Endothelial cell of umbilical vein (primary cell): ENCODE measurements at regions of chr12 and their contacts with region 1.

Region 1: GRCh38 chr12:49232940-49233841 is 31.7 kb upstream of the TUBA1C start:
- DNase-seq: peak; percentile 71
- H3K4me3 ChIP-seq: peak overlapping the region in 1 of 3 experiments; percentile 5
- H3K27ac ChIP-seq: no peak overlapping the region
- H3K4me1 ChIP-seq: peaks cover 12% of the 10 kb centered on the region
- H3K27me3 ChIP-seq: no peaks in the 10 kb centered on the region
- CTCF ChIP-seq: peak in 1 of 2 donors; percentile 34
- POLR2A ChIP-seq: no peak

Region 2: DNA sequence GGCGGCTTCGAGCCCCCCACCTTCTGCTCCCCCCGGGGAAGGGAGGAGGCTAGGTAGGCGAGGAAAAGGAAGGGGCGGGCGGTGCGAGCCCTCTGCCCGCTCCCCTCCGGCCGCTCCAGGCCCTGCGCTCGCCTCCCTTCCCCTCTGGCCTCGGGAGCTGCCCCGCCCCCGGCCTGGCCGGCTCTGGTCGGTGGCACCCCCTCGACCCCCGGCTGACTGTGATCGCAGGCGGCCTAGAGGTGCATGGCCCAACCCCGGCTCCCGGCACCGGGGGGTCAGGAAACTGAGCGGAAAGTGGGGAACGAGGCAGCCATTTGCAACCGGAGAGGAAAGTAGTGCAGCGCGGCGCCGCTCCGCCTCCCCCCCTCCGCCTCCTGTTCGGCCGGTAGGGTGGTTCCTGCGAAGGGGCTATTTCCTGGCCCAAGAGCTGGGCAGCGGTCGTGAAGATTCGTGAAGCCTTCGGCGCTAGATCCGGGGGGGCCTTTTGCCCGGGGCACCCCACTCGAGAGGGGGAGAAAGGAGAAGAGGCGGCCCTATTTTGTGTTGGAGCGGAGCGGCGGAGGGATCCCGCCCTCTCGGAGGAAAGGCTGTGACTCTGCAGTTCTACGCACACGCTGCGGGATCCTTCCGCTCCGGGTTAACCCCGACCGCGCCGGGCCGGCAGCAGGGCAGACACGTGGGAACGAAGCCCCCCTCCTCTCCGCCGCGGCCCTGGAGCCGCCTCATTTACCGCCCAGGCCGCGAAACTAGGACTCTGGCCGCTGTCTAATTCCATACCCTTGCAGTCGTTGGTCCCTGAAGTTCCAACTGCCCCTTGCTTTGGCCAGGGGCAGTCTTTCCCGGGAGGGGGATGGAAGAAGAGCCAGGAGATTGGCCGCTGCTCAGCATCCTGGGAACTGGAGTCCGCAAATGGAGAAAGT is 172.7 kb before region 1 on chr12 and contains the start of gene KMT2D:
- CTCF ChIA-PET with region 1: interaction called, 33 read pairs
- POLR2A ChIA-PET with region 1: no interaction called
- dilution Hi-C with region 1: no loop called
- intact Hi-C with region 1: loop called (anchors 1 kb)
- DNase-seq: peak; percentile 92
- H3K4me3 ChIP-seq: peak within 1 kb of the TSS; percentile 73 to 97 (median 77)
- H3K27ac ChIP-seq: peak within 1 kb of the TSS; percentile 93
- H3K4me1 ChIP-seq: peaks cover 39% of the 10 kb centered on the region
- H3K27me3 ChIP-seq: no peaks in the 10 kb centered on the region
- CTCF ChIP-seq: peak; percentile 6 to 13
- POLR2A ChIP-seq: peak; percentile 85
- total RNA-seq, gene KMT2D: 106 and 120 TPM in 2 replicates

Region 3: GRCh38 chr12:49098035-49098451 is 135.1 kb before region 1 on chr12:
- CTCF ChIA-PET with region 1: interaction called, 17 read pairs
- POLR2A ChIA-PET with region 1: no interaction called
- dilution Hi-C with region 1: no loop called
- intact Hi-C with region 1: no loop called
- DNase-seq: peak; percentile 58
- H3K4me3 ChIP-seq: no peak overlapping the region
- H3K27ac ChIP-seq: no peak overlapping the region
- H3K4me1 ChIP-seq: peaks cover 19% of the 10 kb centered on the region
- H3K27me3 ChIP-seq: no peaks in the 10 kb centered on the region
- CTCF ChIP-seq: peak; percentile 81 to 91
- POLR2A ChIP-seq: no peak

Region 4: DNA sequence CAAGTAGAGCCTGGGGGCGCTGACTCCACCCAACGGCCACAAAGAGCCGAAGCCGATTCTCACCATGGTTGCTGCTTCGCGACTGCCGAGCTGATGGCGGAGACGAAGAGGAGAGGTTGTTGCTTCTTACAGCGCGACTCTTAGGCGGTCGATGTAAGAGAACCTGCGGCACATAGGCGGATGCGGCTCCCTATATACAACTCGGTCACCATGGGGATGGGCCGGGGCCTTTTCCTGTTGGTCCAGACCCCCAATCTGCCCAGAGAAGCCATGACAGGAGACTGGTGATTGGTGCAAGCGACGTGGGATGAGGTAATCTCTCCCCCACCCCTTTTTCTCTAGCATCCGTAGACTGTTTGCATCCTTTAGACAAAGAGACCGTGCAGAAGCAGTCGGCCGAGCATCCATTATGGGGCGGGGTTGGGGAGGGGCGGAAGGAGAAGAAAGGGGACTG is 44.2 kb before region 1 on chr12 and contains the start of gene TUBA1A:
- CTCF ChIA-PET with region 1: interaction called, 38 read pairs
- POLR2A ChIA-PET with region 1: interaction called, 17 read pairs
- dilution Hi-C with region 1: no loop called
- intact Hi-C with region 1: loop called (anchors 1 kb)
- DNase-seq: peak; percentile 99
- H3K4me3 ChIP-seq: peak within 1 kb of the TSS; percentile 74 to 95 (median 89)
- H3K27ac ChIP-seq: peak within 1 kb of the TSS; percentile 95
- H3K4me1 ChIP-seq: peaks cover 28% of the 10 kb centered on the region
- H3K27me3 ChIP-seq: no peaks in the 10 kb centered on the region
- CTCF ChIP-seq: no peak
- POLR2A ChIP-seq: peak; percentile 100
- total RNA-seq, gene TUBA1A: 701 and 740 TPM in 2 replicates

Region 5: DNA sequence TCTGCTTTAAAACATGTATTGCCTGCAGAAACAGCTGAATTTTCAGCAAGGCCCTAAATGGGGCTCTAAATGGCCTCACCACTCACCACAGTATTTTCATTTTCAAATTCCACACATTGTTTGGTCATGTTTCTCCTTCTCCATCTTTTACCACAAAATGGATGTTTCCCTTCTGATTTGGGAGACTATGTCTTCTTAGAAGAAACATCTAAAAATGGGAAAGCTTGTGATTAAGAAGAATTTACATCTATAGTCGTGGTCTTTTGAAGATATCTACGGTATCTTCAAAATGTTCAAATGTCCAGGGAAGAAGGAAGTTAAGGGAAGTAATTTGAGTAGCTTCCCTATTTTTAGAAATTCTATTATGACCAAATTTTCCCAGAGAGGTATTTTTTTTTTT is 11.0 kb after region 1 on chr12:
- CTCF ChIA-PET with region 1: interaction called, 13 read pairs
- POLR2A ChIA-PET with region 1: interaction called, 4 read pairs
- dilution Hi-C with region 1: no loop called
- intact Hi-C with region 1: no loop called
- DNase-seq: no peak
- H3K4me3 ChIP-seq: no peak overlapping the region
- H3K27ac ChIP-seq: no peak overlapping the region
- H3K4me1 ChIP-seq: no peaks in the 10 kb centered on the region
- H3K27me3 ChIP-seq: no peaks in the 10 kb centered on the region
- CTCF ChIP-seq: no peak
- POLR2A ChIP-seq: no peak